ENCODE measurements at regions of chr9 and their contacts with region 1.

Region 1: DNA sequence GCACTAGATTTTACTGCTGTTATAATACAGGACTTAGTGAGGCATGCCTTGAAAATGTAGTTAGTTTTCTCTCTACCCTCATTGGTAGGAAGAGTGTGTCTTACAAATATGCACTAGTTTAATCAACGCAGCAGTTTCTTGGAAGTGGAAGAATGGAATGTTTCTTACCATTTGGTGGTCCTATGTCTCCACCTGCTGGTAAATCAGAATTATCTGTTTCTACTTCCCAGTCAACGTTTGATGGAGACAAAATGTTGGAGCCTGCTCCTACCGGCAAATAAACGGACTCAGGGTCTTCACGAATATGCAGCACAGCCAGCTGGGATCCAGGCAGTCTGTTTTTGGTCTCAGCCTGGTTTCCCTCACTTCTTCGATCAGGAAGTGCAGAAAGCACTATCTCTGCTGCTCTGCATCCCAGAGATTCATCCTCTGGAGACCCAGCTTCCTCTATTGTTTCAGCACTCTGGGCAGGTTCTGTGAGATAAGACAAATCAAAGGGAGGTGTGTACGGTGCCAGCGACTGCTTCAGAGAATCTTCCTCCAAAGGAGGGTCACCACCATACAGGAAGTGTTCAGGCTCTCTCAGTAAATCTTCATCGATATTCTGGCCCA is 59.5 kb upstream of the PCA3 start:
- DNase-seq: no peak
- ATAC-seq: peak; percentile 55 to 56
- H3K4me3 ChIP-seq: no peak overlapping the region
- H3K27ac ChIP-seq: no peak overlapping the region
- H3K4me1 ChIP-seq: no peaks in the 10 kb centered on the region
- H3K27me3 ChIP-seq: no peaks in the 10 kb centered on the region

Region 2: GRCh38 chr9:76203373-76203772 is 501.3 kb before region 1 on chr9:
- intact Hi-C with region 1: no loop called
- DNase-seq: peak in 2 of 3 donors; percentile 37 to 77
- ATAC-seq: peak in 1 of 2 donors; percentile 47
- H3K4me3 ChIP-seq: no peak overlapping the region
- H3K27ac ChIP-seq: no peak overlapping the region
- H3K4me1 ChIP-seq: no peaks in the 10 kb centered on the region
- H3K27me3 ChIP-seq: no peaks in the 10 kb centered on the region

Region 3: GRCh38 chr9:76441551-76442322 is 263.0 kb before region 1 on chr9:
- intact Hi-C with region 1: loop called in 3 of 4 experiments (anchors 2 to 10 kb)
- DNase-seq: no peak
- ATAC-seq: no peak
- H3K4me3 ChIP-seq: no peak overlapping the region
- H3K27ac ChIP-seq: no peak overlapping the region
- H3K4me1 ChIP-seq: no peaks in the 10 kb centered on the region
- H3K27me3 ChIP-seq: no peaks in the 10 kb centered on the region

Region 4: GRCh38 chr9:76451234-76451633 is 253.5 kb before region 1 on chr9:
- intact Hi-C with region 1: loop called (anchors 2 to 10 kb)
- DNase-seq: no peak
- ATAC-seq: no peak
- H3K4me3 ChIP-seq: no peak overlapping the region
- H3K27ac ChIP-seq: no peak overlapping the region
- H3K4me1 ChIP-seq: no peaks in the 10 kb centered on the region
- H3K27me3 ChIP-seq: no peaks in the 10 kb centered on the region

Region 5: GRCh38 chr9:76667521-76667957 is 37.2 kb before region 1 on chr9:
- intact Hi-C with region 1: loop called in 1 of 4 experiments (anchors 5 kb)
- DNase-seq: no peak
- ATAC-seq: peak; percentile 74 to 91
- H3K4me3 ChIP-seq: no peak overlapping the region
- H3K27ac ChIP-seq: no peak overlapping the region
- H3K4me1 ChIP-seq: no peaks in the 10 kb centered on the region
- H3K27me3 ChIP-seq: no peaks in the 10 kb centered on the region

Region 6: DNA sequence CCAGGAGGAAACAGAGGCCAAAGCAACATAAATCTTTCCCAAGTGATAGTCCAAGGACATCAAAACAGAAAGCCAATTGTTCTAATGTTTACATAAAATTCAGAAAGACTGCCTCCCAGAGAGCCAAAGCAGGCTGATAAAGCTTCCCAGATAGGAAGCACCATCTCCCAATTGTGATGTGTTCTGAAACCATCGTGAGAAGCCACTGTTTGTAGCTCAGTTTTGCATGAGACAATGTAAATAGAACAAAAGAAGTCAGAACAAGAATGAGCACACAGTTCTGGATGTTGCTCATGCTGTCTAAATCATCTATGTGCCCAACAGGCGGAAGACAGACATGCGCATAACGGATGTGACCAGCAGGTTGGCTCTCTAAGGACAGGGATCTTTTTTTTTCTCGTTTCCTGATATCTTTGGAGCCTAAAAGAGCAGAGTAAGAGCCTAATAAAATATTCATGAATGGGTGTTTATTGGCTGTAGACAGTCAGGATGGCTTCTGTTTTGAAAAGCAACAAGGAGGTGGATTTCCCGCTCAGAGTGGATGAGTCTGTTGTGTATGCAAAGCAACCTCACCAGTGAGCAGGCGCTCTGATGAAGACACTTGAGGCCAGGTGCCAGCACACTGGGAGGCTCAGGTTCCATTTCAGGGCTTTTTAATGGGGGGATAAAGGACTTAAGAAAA is 829.8 kb after region 1 on chr9:
- intact Hi-C with region 1: no loop called
- DNase-seq: no peak
- ATAC-seq: peak; percentile 65 to 91
- H3K4me3 ChIP-seq: no peak overlapping the region
- H3K27ac ChIP-seq: no peak overlapping the region
- H3K4me1 ChIP-seq: no peaks in the 10 kb centered on the region
- H3K27me3 ChIP-seq: no peaks in the 10 kb centered on the region

Measured in right cardiac atrium (tissue), 5 donors.